ENCODE measurements at regions of chr12 and their contacts with region 1.

Region 1: GRCh38 chr12:10511756-10512355 is 6.2 kb downstream of the EIF2S3B start:
- DNase-seq: no peak
- ATAC-seq: no peak

Region 2: DNA sequence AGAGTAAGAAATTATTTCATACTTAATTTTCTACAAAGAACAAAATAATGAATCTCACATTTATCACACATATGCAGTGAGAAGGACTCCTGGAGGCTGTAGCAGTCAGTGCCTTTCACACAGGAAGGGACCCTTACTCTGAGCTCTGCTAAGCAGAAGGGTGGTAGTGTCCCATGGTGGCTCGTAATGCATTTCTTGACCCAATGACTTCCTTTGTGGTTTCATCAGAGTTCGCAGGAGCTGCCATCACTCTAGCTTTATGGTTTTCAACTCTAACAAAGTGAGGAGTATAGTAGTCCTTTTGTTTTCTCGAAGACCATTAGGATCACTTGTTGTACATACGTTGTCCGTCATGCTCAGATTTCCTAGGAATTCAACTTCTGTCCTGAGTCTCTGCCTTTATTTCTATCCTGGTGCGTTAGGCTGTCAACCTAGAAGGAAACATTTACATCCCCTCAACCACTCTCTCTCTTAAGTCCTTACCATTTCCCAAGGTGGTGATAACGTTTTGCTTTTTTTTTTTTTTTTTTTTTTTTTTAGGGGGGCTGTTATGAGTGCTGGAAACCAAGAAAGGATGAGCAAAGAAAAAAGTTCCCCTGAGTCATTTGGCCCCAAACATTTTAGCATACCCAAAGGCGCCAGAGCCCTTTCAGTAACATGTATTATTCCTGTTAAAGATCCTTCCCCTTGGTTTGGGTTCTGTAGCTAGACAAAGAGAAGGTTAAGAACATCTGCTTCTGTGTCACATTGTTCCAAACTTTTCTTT is 262.0 kb before region 1 on chr12:
- intact Hi-C with region 1: loop called in 1 of 2 experiments (anchors 10 kb)
- DNase-seq: no peak
- ATAC-seq: no peak